ENCODE measurements at regions of chr10 and their contacts with region 1.

Region 1: GRCh38 chr10:124741281-124741921 is 2.8 kb downstream of the FAM53B start:
- DNase-seq: peak; percentile 87
- H3K4me3 ChIP-seq: peak overlapping the region; percentile 95
- H3K27ac ChIP-seq: peak overlapping the region; percentile 92
- H3K4me1 ChIP-seq: peaks cover 73% of the 10 kb centered on the region
- CTCF ChIP-seq: peak; percentile 90

Region 2: GRCh38 chr10:124145109-124145870 is 596.1 kb before region 1 on chr10:
- CTCF ChIA-PET with region 1: no interaction called
- POLR2A ChIA-PET with region 1: no interaction called
- intact Hi-C with region 1: no loop called
- DNase-seq: peak; percentile 87
- H3K4me3 ChIP-seq: peak overlapping the region; percentile 72
- H3K27ac ChIP-seq: peak overlapping the region; percentile 80
- H3K4me1 ChIP-seq: peaks cover 90% of the 10 kb centered on the region
- CTCF ChIP-seq: no peak

Region 3: DNA sequence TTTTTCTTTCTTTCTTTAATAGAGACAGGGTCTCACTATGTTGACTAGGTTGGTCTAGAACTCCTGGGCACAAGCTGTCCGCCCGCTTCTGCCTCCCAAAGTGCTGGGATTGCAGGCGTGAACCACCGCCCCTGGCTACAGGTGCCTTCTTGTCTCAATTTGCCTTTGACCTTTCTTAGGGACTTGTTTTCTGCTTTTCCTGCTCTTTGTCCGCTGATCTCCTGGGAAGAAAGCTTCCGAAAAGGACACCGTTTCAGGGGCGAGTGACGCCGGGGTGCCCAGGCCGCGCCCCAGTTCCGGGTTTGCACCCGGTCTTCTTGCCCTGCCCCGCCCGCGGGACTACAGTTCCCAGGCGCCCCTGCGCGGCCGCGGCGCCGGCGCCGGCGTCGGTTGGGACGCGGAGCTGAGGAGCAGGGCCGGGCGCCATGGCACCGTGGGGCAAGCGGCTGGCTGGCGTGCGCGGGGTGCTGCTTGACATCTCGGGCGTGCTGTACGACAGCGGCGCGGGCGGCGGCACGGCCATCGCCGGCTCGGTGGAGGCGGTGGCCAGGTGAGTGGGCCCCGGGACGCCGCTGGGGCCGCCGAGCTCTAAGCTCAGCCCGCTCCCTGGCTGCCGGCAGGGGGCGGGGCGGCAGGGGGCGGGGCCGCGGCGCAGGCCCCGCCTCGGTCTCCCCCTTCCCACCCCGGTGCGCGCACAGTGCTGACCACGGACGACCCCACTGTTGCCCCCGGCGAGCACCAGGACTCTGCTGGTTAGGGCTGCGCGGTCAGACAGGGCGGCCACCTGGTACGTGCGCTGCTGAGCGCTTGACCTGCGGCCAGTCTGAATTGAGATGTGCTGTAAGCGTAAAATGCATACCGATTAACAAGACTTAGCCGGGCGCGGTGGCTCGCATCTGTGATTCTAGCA is 279.7 kb before region 1 on chr10 and contains the start of gene LHPP:
- CTCF ChIA-PET with region 1: no interaction called
- POLR2A ChIA-PET with region 1: no interaction called
- intact Hi-C with region 1: loop called (anchors 5 kb)
- DNase-seq: peak; percentile 88
- H3K4me3 ChIP-seq: peak within 1 kb of the TSS; percentile 72
- H3K27ac ChIP-seq: peak within 1 kb of the TSS; percentile 12
- H3K4me1 ChIP-seq: peaks cover 32% of the 10 kb centered on the region
- CTCF ChIP-seq: peak; percentile 28; the same call in 1 of the 2 replicates
- total RNA-seq, gene LHPP: 19.1 and 30.3 TPM in 2 replicates

Region 4: DNA sequence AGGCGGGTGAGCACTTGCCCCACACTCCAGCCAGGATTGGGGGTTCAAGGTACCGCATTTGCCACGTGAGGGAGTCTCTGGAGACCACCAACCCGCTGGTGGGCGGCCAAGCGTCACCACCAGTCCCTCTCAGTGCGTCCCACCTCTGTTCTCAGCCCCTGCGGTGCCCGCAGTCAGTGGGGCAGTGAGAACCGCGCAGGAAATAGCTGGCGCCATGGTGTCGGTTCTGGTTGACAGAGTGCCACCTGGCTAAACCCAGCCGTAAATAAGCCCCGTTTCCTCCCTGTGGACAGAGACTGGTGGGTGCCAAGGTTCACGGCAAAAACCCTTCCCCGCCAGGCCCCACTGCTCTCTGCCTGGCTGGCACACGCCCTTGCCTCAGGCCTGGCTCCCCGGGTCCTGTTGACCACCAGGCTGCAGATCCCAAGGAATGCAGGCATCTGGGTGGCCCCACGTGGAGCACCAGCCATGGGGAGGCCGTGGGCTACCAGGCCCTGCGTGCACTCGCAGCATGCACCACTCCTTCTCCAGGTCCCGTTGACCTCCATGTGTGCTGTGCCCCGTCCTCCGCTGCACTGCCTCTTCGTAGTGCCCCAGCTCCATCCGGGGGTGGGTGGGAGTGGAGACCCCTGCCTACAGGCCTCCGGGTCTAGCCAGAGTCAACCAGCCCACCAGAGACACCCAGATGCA is 139.8 kb before region 1 on chr10:
- CTCF ChIA-PET with region 1: interaction called, 9 read pairs
- POLR2A ChIA-PET with region 1: interaction called, 4 read pairs
- intact Hi-C with region 1: loop called (anchors 1 kb)
- DNase-seq: peak; percentile 92
- H3K4me3 ChIP-seq: peak overlapping the region; percentile 15
- H3K27ac ChIP-seq: peak overlapping the region; percentile 79
- H3K4me1 ChIP-seq: peaks cover 89% of the 10 kb centered on the region
- CTCF ChIP-seq: no peak

Region 5: GRCh38 chr10:124647421-124648130 is 93.8 kb before region 1 on chr10:
- CTCF ChIA-PET with region 1: interaction called, 4 read pairs
- POLR2A ChIA-PET with region 1: interaction called, 5 read pairs
- intact Hi-C with region 1: loop called (anchors 5 kb)
- DNase-seq: peak; percentile 80
- H3K4me3 ChIP-seq: peak overlapping the region; percentile 20
- H3K27ac ChIP-seq: peak overlapping the region; percentile 38
- H3K4me1 ChIP-seq: peaks cover 25% of the 10 kb centered on the region
- CTCF ChIP-seq: peak; percentile 66

Region 6: GRCh38 chr10:124719213-124719851 is 22.1 kb before region 1 on chr10:
- CTCF ChIA-PET with region 1: interaction called, 11 read pairs
- POLR2A ChIA-PET with region 1: interaction called, 5 read pairs
- intact Hi-C with region 1: loop called (anchors 1 kb)
- DNase-seq: peak; percentile 81
- H3K4me3 ChIP-seq: peak overlapping the region; percentile 33
- H3K27ac ChIP-seq: peak overlapping the region; percentile 66
- H3K4me1 ChIP-seq: peaks cover 68% of the 10 kb centered on the region
- CTCF ChIP-seq: peak; percentile 79

Region 7: DNA sequence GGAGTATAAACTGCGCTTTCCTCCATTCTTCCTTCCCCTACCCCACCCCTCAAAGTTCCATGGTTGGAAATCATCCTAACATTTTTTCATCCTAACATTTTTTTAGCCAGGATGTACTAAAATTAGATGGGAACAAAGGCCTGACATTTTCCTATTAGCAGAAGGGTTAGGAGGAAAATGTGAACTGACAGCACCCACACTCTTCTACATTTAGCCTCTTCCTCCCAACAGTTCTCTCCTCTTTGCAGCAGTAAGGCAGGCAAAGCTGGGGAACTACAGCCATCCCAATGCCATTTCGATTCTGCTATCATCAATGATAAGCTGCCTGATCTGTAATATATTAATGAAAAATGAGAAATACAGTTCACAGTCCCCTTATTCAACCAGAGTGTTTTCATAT is 14.2 kb after region 1 on chr10:
- CTCF ChIA-PET with region 1: no interaction called
- POLR2A ChIA-PET with region 1: interaction called, 20 read pairs
- intact Hi-C with region 1: no loop called
- DNase-seq: no peak
- H3K4me3 ChIP-seq: no peak overlapping the region
- H3K27ac ChIP-seq: no peak overlapping the region
- H3K4me1 ChIP-seq: no peaks in the 10 kb centered on the region
- CTCF ChIP-seq: no peak

Region 8: GRCh38 chr10:124916585-124917427 is 175.4 kb after region 1 on chr10:
- CTCF ChIA-PET with region 1: no interaction called
- POLR2A ChIA-PET with region 1: interaction called, 4 read pairs
- intact Hi-C with region 1: loop called (anchors 1 kb)
- DNase-seq: peak; percentile 97
- H3K4me3 ChIP-seq: peak overlapping the region; percentile 92
- H3K27ac ChIP-seq: peak overlapping the region; percentile 63
- H3K4me1 ChIP-seq: peaks cover 19% of the 10 kb centered on the region
- CTCF ChIP-seq: no peak